ENCODE measurements at regions of chr10 and their contacts with region 1.

Region 1: GRCh38 chr10:59906417-59907202 is at the start of gene CCDC6:
- DNase-seq: peak; percentile 97 to 100
- H3K4me3 ChIP-seq: peak within 1 kb of the TSS; percentile 93
- H3K4me3 Mint-ChIP-seq: peak within 1 kb of the TSS; percentile 99
- H3K27ac Mint-ChIP-seq: peak within 1 kb of the TSS; percentile 92
- H3K4me1 ChIP-seq: peaks cover 33% of the 10 kb centered on the region
- H3K4me1 Mint-ChIP-seq: peaks cover 45% of the 10 kb centered on the region
- H3K27me3 ChIP-seq: no peaks in the 10 kb centered on the region
- H3K27me3 Mint-ChIP-seq: no peaks in the 10 kb centered on the region
- CTCF ChIP-seq: peak; percentile 92 to 96
- total RNA-seq, gene CCDC6: 113 and 116 TPM in 2 replicates

Region 2: GRCh38 chr10:59830601-59831259 is 75.9 kb before region 1 on chr10:
- CTCF ChIA-PET with region 1: interaction called, 25 read pairs
- POLR2A ChIA-PET with region 1: no interaction called
- intact Hi-C with region 1: loop called (anchors 1 kb)
- DNase-seq: peak; percentile 68 to 79
- H3K4me3 ChIP-seq: no peak overlapping the region
- H3K4me3 Mint-ChIP-seq: no peak overlapping the region
- H3K27ac Mint-ChIP-seq: no peak overlapping the region
- H3K4me1 ChIP-seq: no peaks in the 10 kb centered on the region; the same call in 1 of the 2 replicates
- H3K4me1 Mint-ChIP-seq: peaks cover 7% of the 10 kb centered on the region
- H3K27me3 ChIP-seq: no peaks in the 10 kb centered on the region
- H3K27me3 Mint-ChIP-seq: no peaks in the 10 kb centered on the region
- CTCF ChIP-seq: peak; percentile 91 to 98

Region 3: DNA sequence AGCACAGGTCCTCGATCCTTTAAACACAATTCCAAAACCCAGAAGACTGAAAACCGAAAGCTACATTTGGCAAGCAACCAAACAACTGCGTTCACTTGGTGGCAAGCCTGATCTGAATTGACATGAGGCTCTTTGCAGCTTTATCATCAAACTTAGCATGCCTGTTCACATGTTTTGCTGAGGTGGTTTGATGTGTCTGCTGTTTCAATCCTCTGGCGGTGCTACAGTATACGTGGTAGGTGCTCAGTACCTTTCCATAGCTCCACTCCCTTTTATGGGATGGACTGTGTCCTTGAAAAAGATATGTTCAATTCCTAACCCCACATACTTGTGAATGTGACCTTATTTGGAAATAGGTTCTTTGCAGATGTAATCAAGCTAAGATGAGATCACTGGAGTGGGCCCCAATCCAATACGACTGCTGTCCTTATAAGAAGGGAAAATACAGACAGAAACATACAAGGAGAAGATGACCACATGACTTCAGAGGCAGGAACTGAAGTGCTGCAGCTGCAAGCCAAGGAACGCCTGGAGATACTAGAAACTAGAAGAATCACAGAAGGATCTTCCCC is 33.6 kb before region 1 on chr10:
- CTCF ChIA-PET with region 1: interaction called, 22 read pairs
- POLR2A ChIA-PET with region 1: interaction called, 7 read pairs
- intact Hi-C with region 1: loop called (anchors 2 kb)
- DNase-seq: no peak
- H3K4me3 ChIP-seq: no peak overlapping the region
- H3K4me3 Mint-ChIP-seq: no peak overlapping the region
- H3K27ac Mint-ChIP-seq: no peak overlapping the region
- H3K4me1 ChIP-seq: peaks cover 38% of the 10 kb centered on the region
- H3K4me1 Mint-ChIP-seq: peaks cover 37% of the 10 kb centered on the region
- H3K27me3 ChIP-seq: no peaks in the 10 kb centered on the region
- H3K27me3 Mint-ChIP-seq: no peaks in the 10 kb centered on the region
- CTCF ChIP-seq: no peak

Region 4: DNA sequence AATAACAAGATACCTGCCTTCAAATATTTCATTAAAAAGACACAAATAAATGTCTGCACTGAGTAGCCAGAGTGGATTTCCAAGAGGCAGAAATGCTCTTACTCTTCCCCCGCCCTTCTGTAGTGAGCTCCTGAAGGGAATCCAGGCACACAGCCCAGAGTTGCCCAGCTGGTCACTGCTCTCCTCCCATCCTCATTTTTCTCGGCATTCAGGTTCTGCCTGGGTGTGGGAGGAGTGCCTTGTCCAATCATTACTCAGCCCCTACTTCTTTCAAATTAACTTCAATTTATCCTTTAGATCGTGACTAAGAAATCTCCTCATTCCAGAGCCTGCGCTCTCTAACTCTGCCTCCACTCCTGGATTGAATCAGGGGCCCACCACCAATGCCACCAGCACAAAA is 12.5 kb before region 1 on chr10:
- CTCF ChIA-PET with region 1: interaction called, 13 read pairs
- POLR2A ChIA-PET with region 1: interaction called, 6 read pairs
- intact Hi-C with region 1: loop called (anchors 1 kb)
- DNase-seq: no peak
- H3K4me3 ChIP-seq: no peak overlapping the region
- H3K4me3 Mint-ChIP-seq: no peak overlapping the region
- H3K27ac Mint-ChIP-seq: no peak overlapping the region
- H3K4me1 ChIP-seq: peaks cover 33% of the 10 kb centered on the region
- H3K4me1 Mint-ChIP-seq: peaks cover 52% of the 10 kb centered on the region
- H3K27me3 ChIP-seq: no peaks in the 10 kb centered on the region
- H3K27me3 Mint-ChIP-seq: no peaks in the 10 kb centered on the region
- CTCF ChIP-seq: no peak

Region 5: GRCh38 chr10:59971915-59972314 is 65.3 kb after region 1 on chr10:
- CTCF ChIA-PET with region 1: interaction called, 7 read pairs
- POLR2A ChIA-PET with region 1: interaction called, 10 read pairs
- intact Hi-C with region 1: loop called (anchors 1 kb)
- DNase-seq: peak; percentile 93 to 95
- H3K4me3 ChIP-seq: no peak overlapping the region
- H3K4me3 Mint-ChIP-seq: no peak overlapping the region
- H3K27ac Mint-ChIP-seq: no peak overlapping the region
- H3K4me1 ChIP-seq: peaks cover 40% of the 10 kb centered on the region
- H3K4me1 Mint-ChIP-seq: peaks cover 26% of the 10 kb centered on the region
- H3K27me3 ChIP-seq: no peaks in the 10 kb centered on the region
- H3K27me3 Mint-ChIP-seq: no peaks in the 10 kb centered on the region
- CTCF ChIP-seq: no peak

Region 6: GRCh38 chr10:60023155-60023877 is 116.7 kb after region 1 on chr10:
- CTCF ChIA-PET with region 1: interaction called, 12 read pairs
- POLR2A ChIA-PET with region 1: no interaction called
- intact Hi-C with region 1: no loop called
- DNase-seq: no peak
- H3K4me3 ChIP-seq: no peak overlapping the region
- H3K4me3 Mint-ChIP-seq: no peak overlapping the region
- H3K27ac Mint-ChIP-seq: no peak overlapping the region
- H3K4me1 ChIP-seq: no peaks in the 10 kb centered on the region
- H3K4me1 Mint-ChIP-seq: no peaks in the 10 kb centered on the region
- H3K27me3 ChIP-seq: no peaks in the 10 kb centered on the region
- H3K27me3 Mint-ChIP-seq: no peaks in the 10 kb centered on the region
- CTCF ChIP-seq: no peak

Region 7: GRCh38 chr10:60041489-60042133 is 135.0 kb after region 1 on chr10:
- CTCF ChIA-PET with region 1: no interaction called
- POLR2A ChIA-PET with region 1: no interaction called
- intact Hi-C with region 1: loop called (anchors 2 kb)
- DNase-seq: no peak
- H3K4me3 ChIP-seq: no peak overlapping the region
- H3K4me3 Mint-ChIP-seq: no peak overlapping the region
- H3K27ac Mint-ChIP-seq: no peak overlapping the region
- H3K4me1 ChIP-seq: peaks cover 7% of the 10 kb centered on the region; the same call in 1 of the 2 replicates
- H3K4me1 Mint-ChIP-seq: peaks cover 13% of the 10 kb centered on the region
- H3K27me3 ChIP-seq: no peaks in the 10 kb centered on the region
- H3K27me3 Mint-ChIP-seq: no peaks in the 10 kb centered on the region
- CTCF ChIP-seq: no peak